CD8-positive, alpha-beta memory T cell (primary cell): ENCODE measurements at regions of chr19 and their contacts with region 1.

Region 1: DNA sequence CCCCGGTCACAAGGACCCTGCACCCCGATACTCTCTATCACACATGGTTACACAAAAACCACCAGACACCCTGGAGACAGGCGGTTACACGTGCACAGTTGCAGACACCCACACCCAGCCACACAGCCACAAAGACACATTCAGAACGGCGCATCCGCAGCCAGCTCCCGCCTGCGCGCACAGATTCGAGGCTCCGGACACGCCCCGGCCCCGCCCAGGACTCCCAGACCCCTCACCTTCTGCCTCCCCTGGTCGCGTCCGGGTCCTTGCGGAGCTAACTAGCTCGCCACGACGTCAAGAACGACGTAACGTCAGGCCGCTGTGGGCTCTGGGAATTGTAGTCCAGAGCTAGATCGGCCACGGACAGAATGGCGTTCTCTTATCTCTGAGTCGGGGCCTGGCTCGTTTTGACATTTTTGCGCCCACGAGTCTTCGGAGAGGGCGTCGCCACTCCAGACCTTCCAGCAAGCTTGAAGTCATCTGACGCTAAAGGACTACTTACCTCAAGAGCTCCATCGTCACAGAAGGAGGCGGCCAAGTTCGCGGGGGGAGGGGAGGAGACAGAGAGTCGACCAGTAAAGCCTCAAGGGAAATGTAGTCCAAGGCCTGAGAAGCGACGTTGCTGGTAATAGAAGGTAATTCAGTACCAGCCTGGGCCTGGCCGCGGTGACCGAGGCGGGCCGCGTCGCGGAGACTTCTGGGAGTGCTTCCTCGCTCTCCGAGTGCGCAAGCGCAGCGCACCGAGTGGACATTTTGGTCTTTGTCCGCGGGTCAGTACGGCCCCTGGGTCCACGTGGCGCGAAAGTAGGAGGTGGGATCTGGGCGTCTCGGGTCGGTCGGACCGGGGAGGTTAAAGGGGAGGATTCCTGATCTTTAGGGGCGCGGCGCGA is at the starts of genes ZNF146 and ZNF565:
- DNase-seq: peak; percentile 93 to 97 (median 95)
- H3K4me3 ChIP-seq: peak within 1 kb of the TSS; percentile 96
- H3K4me3 Mint-ChIP-seq: no peak within 1 kb of the TSS
- H3K27ac ChIP-seq: peak within 1 kb of the TSS; percentile 95
- H3K27ac Mint-ChIP-seq: peak within 1 kb of the TSS in 1 of 8 donors; percentile 86
- H3K4me1 ChIP-seq: peaks cover 22% of the 10 kb centered on the region
- H3K4me1 Mint-ChIP-seq: peaks cover 23 to 36% (median 30%) of the 10 kb centered on the region in 3 donors
- H3K27me3 ChIP-seq: no peaks in the 10 kb centered on the region
- H3K27me3 Mint-ChIP-seq: no peaks in the 10 kb centered on the region
- total RNA-seq, gene ZNF146: 122 to 129 TPM
- total RNA-seq, gene ZNF565: 2.1 to 2.5 TPM

Region 2: GRCh38 chr19:36114763-36115452 is 99.7 kb before region 1 on chr19 and contains the start of gene POLR2I:
- CTCF ChIA-PET with region 1: no interaction called
- POLR2A ChIA-PET with region 1: interaction called, 11 read pairs
- DNase-seq: peak; percentile 97 to 100 (median 99)
- H3K4me3 ChIP-seq: peak within 1 kb of the TSS; percentile 99
- H3K4me3 Mint-ChIP-seq: peak within 1 kb of the TSS; percentile 82 to 94 (median 90)
- H3K27ac ChIP-seq: peak within 1 kb of the TSS; percentile 95
- H3K27ac Mint-ChIP-seq: peak within 1 kb of the TSS; percentile 91 to 99 (median 97)
- H3K4me1 ChIP-seq: peaks cover 29% of the 10 kb centered on the region
- H3K4me1 Mint-ChIP-seq: peaks cover 34 to 55% (median 48%) of the 10 kb centered on the region in 3 donors
- H3K27me3 ChIP-seq: no peaks in the 10 kb centered on the region
- H3K27me3 Mint-ChIP-seq: peaks cover 0 to 7% of the 10 kb centered on the region in 2 donors
- total RNA-seq, gene POLR2I: 118 to 131 TPM

Region 3: DNA sequence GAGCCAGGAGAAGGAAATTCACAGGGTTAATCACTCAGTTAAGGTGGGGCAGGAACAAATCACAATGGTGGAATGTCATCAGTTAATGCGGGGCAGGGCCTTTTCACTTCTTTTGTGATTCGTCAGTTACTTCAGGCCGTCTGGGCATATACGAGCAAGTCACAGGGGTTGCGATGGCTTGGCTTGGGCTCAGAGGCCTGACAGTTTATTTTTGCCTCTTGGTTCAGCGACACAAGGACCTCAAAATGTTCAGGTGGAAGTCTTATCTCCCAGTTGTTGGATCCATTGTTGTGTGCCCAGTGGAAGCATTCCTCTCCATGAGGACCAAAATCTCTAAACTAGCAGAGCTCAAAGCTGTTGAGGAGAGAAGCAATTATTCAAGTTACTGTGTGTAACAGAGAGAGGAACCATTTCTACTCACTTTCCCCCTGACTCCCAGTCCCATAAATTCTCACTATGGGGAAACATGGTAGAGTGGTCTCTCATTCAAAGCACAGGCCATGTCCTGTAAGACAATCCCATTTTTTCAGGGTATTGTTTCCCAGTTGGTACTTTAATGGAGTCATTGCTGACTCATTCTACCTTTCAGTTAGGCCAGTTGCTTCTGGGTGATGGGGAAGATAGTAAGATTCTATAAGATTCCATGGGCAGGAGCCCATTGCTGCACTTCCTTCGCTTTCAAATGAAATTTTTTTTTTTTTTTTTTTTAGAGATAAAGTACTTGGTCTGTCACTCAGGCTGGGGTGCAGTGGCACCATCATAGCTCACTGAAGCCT is 53.6 kb before region 1 on chr19:
- CTCF ChIA-PET with region 1: no interaction called
- POLR2A ChIA-PET with region 1: interaction called, 10 read pairs
- DNase-seq: no peak
- H3K4me3 ChIP-seq: no peak overlapping the region
- H3K4me3 Mint-ChIP-seq: no peak overlapping the region
- H3K27ac ChIP-seq: no peak overlapping the region
- H3K27ac Mint-ChIP-seq: peak overlapping the region in 3 of 8 donors; percentile 43 to 60 (median 56)
- H3K4me1 ChIP-seq: no peaks in the 10 kb centered on the region
- H3K4me1 Mint-ChIP-seq: no peaks in the 10 kb centered on the region
- H3K27me3 ChIP-seq: no peaks in the 10 kb centered on the region
- H3K27me3 Mint-ChIP-seq: no peaks in the 10 kb centered on the region

Region 4: GRCh38 chr19:36850559-36851442 is 636.2 kb after region 1 on chr19 and contains the start of gene ZNF345:
- CTCF ChIA-PET with region 1: no interaction called
- POLR2A ChIA-PET with region 1: interaction called, 12 read pairs
- DNase-seq: peak; percentile 75 to 91 (median 85)
- H3K4me3 ChIP-seq: peak within 1 kb of the TSS; percentile 91
- H3K4me3 Mint-ChIP-seq: no peak within 1 kb of the TSS
- H3K27ac ChIP-seq: peak within 1 kb of the TSS; percentile 68
- H3K27ac Mint-ChIP-seq: no peak within 1 kb of the TSS
- H3K4me1 ChIP-seq: peaks cover 18% of the 10 kb centered on the region
- H3K4me1 Mint-ChIP-seq: peaks cover 11 to 30% (median 19%) of the 10 kb centered on the region in 3 donors
- H3K27me3 ChIP-seq: no peaks in the 10 kb centered on the region
- H3K27me3 Mint-ChIP-seq: no peaks in the 10 kb centered on the region
- total RNA-seq, gene ZNF345: 3.9 to 4.9 TPM